IMR-90 (cell line): ENCODE measurements at regions of chr1 and their contacts with region 1.

Region 1: DNA sequence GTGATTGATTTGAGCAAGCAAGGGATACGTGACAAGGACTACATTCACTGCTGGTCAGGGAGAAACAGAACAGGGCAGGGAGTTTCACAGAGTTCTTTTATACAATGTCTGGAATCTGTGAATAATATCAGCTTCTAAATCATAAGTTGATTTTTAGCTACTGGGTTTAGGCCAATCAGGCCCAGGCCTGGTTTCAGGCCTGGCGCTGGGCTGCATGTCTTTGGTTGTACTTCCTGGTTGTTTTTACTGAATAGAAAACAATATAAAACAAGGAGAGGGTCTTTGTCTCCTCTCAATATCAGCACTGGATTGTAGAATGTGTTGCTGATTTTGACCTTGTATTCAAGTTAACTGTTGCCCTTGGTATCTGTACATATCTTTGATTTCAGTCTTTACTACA is 865 bp upstream of the AMY2A start:
- DNase-seq: no peak
- ATAC-seq: no peak
- H3K4me3 ChIP-seq: no peak overlapping the region
- H3K27ac ChIP-seq: no peak overlapping the region
- H3K4me1 ChIP-seq: no peaks in the 10 kb centered on the region
- H3K27me3 ChIP-seq: no peaks in the 10 kb centered on the region
- CTCF ChIP-seq: no peak
- POLR2A ChIP-seq: no peak
- RAD21 ChIP-seq: no peak

Region 2: DNA sequence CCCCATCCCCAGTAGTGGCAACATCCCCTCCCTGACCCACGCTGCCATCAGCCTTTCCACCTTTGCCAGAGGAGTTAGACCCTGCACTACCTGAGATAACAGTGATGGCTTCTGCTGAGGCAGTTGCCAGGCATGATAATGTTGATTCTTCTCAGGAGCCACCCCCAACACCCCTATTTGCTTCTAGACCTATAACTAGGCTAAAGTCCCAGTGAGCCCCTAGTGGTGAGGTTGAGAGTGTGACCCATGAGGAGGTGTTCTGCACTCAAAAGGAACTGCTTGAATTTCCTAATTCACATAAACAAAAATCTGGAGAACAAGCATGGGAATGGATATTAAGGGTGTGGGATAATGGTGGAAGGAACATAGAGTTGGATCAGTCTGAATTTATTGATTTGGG is 348.5 kb before region 1 on chr1:
- CTCF ChIA-PET with region 1: no interaction called
- POLR2A ChIA-PET with region 1: no interaction called
- dilution Hi-C with region 1: no loop called
- in situ Hi-C with region 1: no loop called
- intact Hi-C with region 1: no loop called
- DNase-seq: no peak
- ATAC-seq: no peak
- H3K4me3 ChIP-seq: no peak overlapping the region
- H3K27ac ChIP-seq: no peak overlapping the region
- H3K4me1 ChIP-seq: peaks cover 10% of the 10 kb centered on the region
- H3K27me3 ChIP-seq: no peaks in the 10 kb centered on the region
- CTCF ChIP-seq: no peak
- POLR2A ChIP-seq: no peak
- RAD21 ChIP-seq: no peak

Region 3: DNA sequence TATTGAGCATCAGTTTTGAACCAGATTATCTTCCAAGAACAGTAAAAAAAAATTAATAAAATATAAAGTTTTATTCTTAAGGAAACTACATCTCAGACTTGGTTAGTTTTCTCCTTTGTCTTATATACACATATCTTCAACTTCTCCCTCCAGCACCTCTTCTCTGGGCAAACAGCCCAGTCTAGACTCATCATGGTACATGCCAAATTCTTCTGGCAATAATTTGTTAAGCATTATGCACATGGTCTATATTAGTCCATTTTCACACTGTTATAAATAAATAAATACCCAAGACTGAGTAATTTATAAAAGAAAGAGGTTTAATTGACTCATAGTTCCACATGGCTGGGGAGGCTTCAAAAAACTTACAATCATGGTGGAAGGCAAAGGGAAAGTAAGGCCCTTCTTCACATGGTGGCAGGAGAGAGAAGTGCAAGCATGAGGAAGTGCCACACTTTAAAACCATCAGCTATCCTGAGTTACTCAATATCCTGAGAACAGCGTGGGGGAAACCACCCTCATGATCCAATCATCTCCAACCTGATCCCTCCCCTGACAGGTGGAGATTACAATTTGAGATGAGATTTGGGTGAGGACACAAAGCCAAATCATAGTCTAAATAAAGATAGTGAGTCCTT is 199.6 kb before region 1 on chr1:
- CTCF ChIA-PET with region 1: no interaction called
- POLR2A ChIA-PET with region 1: no interaction called
- dilution Hi-C with region 1: no loop called
- in situ Hi-C with region 1: no loop called
- intact Hi-C with region 1: no loop called
- DNase-seq: peak; percentile 1
- ATAC-seq: no peak
- H3K4me3 ChIP-seq: no peak overlapping the region
- H3K27ac ChIP-seq: no peak overlapping the region
- H3K4me1 ChIP-seq: no peaks in the 10 kb centered on the region
- H3K27me3 ChIP-seq: no peaks in the 10 kb centered on the region
- CTCF ChIP-seq: no peak
- POLR2A ChIP-seq: no peak
- RAD21 ChIP-seq: no peak

Region 4: DNA sequence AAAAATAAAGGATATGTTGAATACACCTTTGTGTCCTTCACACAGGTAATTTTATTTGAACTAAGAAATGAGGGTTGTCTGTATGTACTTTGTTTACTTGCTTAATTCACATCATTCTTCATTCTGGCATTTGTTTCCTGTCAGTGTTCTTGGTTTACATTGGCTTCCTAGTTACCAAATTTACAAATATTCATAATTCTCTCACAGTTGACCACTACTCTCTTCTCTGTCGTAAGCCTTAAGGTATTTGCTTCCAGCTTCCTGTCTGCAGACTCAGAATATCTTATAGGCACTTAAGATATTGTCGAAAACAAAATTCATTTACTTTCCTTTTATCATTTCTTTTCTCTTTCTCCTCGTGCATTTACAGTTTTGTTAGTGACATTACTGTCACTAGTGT is 74.9 kb before region 1 on chr1:
- CTCF ChIA-PET with region 1: no interaction called
- POLR2A ChIA-PET with region 1: no interaction called
- dilution Hi-C with region 1: no loop called
- in situ Hi-C with region 1: no loop called
- intact Hi-C with region 1: no loop called
- DNase-seq: peak; percentile 33
- ATAC-seq: no peak
- H3K4me3 ChIP-seq: no peak overlapping the region
- H3K27ac ChIP-seq: no peak overlapping the region
- H3K4me1 ChIP-seq: no peaks in the 10 kb centered on the region
- H3K27me3 ChIP-seq: no peaks in the 10 kb centered on the region
- CTCF ChIP-seq: no peak
- POLR2A ChIP-seq: no peak
- RAD21 ChIP-seq: no peak

Region 5: GRCh38 chr1:103576065-103576464 is 40.3 kb before region 1 on chr1:
- CTCF ChIA-PET with region 1: no interaction called
- POLR2A ChIA-PET with region 1: no interaction called
- dilution Hi-C with region 1: no loop called
- in situ Hi-C with region 1: no loop called
- intact Hi-C with region 1: loop called (anchors 5 kb)
- DNase-seq: peak; percentile 0
- ATAC-seq: no peak
- H3K4me3 ChIP-seq: no peak overlapping the region
- H3K27ac ChIP-seq: no peak overlapping the region
- H3K4me1 ChIP-seq: no peaks in the 10 kb centered on the region
- H3K27me3 ChIP-seq: no peaks in the 10 kb centered on the region
- CTCF ChIP-seq: no peak
- POLR2A ChIP-seq: no peak
- RAD21 ChIP-seq: no peak